Head of caudate nucleus (tissue), 42 donors: ENCODE measurements at regions of chr9 and their contacts with region 1.

Region 1: DNA sequence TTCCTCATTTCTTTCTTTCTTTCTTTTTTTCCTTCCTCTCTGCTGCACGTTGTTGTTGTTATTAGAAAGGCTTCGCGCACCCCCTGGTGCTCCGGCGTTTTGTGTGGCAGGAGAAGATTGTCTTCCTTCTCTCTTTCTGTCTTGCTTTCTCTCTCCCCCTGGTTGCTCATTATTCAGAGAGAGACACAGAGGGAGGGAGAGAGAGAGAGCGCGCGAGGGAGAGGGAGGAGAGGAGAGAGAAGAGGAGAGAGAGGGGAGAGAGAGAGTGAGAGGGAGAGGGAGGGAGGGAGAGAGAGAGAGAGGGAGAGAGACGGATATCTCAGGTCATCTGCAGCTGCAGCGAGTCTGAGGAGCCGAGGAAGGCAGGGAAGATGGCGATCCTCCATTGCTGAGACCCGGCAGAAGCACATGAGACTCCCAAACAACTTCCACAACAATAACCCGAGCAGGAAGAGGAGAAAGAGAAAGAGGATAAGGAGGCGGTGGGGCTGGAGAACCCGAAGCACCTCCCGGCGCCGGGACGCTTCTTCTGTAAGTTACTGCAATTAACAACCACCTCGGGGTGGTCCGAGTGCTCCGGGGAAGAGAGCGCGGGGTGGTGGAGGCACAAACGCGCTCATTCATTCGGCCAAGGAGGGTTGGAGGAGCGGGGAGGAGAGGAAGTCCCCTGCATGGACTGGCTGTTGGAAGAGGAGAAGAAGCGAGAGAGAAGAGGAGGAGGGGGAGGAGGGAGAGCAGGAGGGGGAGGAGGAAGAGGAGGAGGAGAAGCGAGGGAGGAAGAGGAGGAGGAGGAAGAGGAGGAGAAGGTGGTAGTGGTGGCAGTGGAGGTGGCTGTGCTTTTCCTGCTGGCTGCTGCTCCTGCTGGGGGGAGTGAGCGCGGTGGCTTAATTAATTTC is at the start of gene ZNF462:
- DNase-seq: peak; percentile 32 to 82 (median 60)

Region 2: GRCh38 chr9:105466898-105467455 is 1396.1 kb before region 1 on chr9:
- intact Hi-C with region 1: no loop called
- DNase-seq: no peak

Region 3: DNA sequence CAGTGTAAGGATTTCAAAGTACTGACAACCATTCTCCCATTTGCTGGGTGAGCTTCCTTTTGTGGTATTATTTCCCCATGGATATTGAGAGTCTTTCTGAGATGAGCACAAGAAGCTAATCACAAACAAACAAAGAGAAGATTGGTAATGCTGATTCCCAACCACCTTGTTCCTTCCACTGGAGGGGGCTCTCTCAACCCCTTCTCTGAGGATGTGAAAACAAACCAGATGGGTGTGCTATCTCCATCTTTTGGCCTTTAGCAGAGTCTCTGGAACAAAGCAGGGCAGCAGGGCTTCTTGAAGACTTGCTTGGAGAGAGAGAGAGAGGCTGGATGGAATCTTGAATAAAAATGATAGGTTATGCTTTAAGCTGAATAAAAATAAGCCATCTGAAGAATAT is 576.8 kb before region 1 on chr9:
- intact Hi-C with region 1: loop called (anchors 10 kb)
- DNase-seq: peak in 35 of 42 donors; percentile 9 to 77 (median 48)

Region 4: DNA sequence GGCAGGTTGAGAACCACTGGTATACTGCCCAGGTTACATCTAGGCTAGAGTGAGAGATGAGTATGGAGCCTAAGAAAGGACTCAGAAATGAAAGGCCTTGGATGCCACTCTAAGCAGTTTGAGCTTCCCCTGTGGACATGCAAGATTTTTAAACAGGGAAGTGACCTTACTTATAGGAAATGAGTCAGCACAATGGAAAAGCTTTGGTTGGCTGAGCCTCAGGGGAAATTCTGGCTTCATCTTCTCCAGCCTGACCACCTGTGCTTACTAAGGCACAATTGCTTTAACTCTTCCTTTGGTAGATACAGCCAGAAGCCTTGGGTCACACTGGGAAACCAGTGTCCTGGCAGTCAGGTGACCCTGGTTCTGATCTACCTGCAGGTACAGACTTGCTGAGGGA is 380.3 kb before region 1 on chr9:
- intact Hi-C with region 1: no loop called
- DNase-seq: no peak

Region 5: GRCh38 chr9:106816524-106816923 is 46.5 kb before region 1 on chr9:
- intact Hi-C with region 1: no loop called
- DNase-seq: no peak